ENCODE measurements at regions of chr5 and their contacts with region 1.

Region 1: GRCh38 chr5:181207214-181208107 is 2.5 kb upstream of the TRIM7 start:
- DNase-seq: peak; percentile 76 to 88 (median 81)
- H3K4me3 ChIP-seq: peak overlapping the region; percentile 71
- H3K4me3 Mint-ChIP-seq: peak overlapping the region; percentile 88 to 97 (median 92)
- H3K27ac ChIP-seq: peak overlapping the region; percentile 67
- H3K27ac Mint-ChIP-seq: peak overlapping the region; percentile 91 to 100 (median 98)
- H3K4me1 ChIP-seq: peaks cover 31% of the 10 kb centered on the region
- H3K4me1 Mint-ChIP-seq: peaks cover 24 to 47% (median 32%) of the 10 kb centered on the region in 4 donors
- H3K27me3 ChIP-seq: no peaks in the 10 kb centered on the region
- H3K27me3 Mint-ChIP-seq: peaks cover 7 to 10% of the 10 kb centered on the region in 2 donors

Region 2: GRCh38 chr5:179986328-179986727 is 1221.1 kb before region 1 on chr5:
- CTCF ChIA-PET with region 1: no interaction called
- POLR2A ChIA-PET with region 1: no interaction called
- intact Hi-C with region 1: no loop called
- DNase-seq: no peak
- H3K4me3 ChIP-seq: no peak overlapping the region
- H3K4me3 Mint-ChIP-seq: no peak overlapping the region
- H3K27ac ChIP-seq: no peak overlapping the region
- H3K27ac Mint-ChIP-seq: no peak overlapping the region
- H3K4me1 ChIP-seq: no peaks in the 10 kb centered on the region
- H3K4me1 Mint-ChIP-seq: no peaks in the 10 kb centered on the region
- H3K27me3 ChIP-seq: no peaks in the 10 kb centered on the region
- H3K27me3 Mint-ChIP-seq: no peaks in the 10 kb centered on the region

Region 3: GRCh38 chr5:180950291-180950949 is 257.0 kb before region 1 on chr5:
- CTCF ChIA-PET with region 1: no interaction called
- POLR2A ChIA-PET with region 1: no interaction called
- intact Hi-C with region 1: no loop called
- DNase-seq: no peak
- H3K4me3 ChIP-seq: no peak overlapping the region
- H3K4me3 Mint-ChIP-seq: no peak overlapping the region
- H3K27ac ChIP-seq: no peak overlapping the region
- H3K27ac Mint-ChIP-seq: no peak overlapping the region
- H3K4me1 ChIP-seq: no peaks in the 10 kb centered on the region
- H3K4me1 Mint-ChIP-seq: peaks cover 0 to 2% (median 0%) of the 10 kb centered on the region in 4 donors
- H3K27me3 ChIP-seq: no peaks in the 10 kb centered on the region
- H3K27me3 Mint-ChIP-seq: peaks cover 3 to 4% of the 10 kb centered on the region in 2 donors

Region 4: GRCh38 chr5:181243512-181244343 is 36.3 kb after region 1 on chr5 and contains the start of gene RACK1:
- CTCF ChIA-PET with region 1: interaction called, 8 read pairs
- POLR2A ChIA-PET with region 1: interaction called, 17 read pairs
- intact Hi-C with region 1: no loop called
- DNase-seq: peak; percentile 90 to 95 (median 91)
- H3K4me3 ChIP-seq: peak within 1 kb of the TSS; percentile 97 to 98
- H3K4me3 Mint-ChIP-seq: peak within 1 kb of the TSS; percentile 93 to 100 (median 98)
- H3K27ac ChIP-seq: peak within 1 kb of the TSS; percentile 96
- H3K27ac Mint-ChIP-seq: peak within 1 kb of the TSS; percentile 96 to 100 (median 99)
- H3K4me1 ChIP-seq: peaks cover 61% of the 10 kb centered on the region
- H3K4me1 Mint-ChIP-seq: peaks cover 42 to 85% (median 63%) of the 10 kb centered on the region in 4 donors
- H3K27me3 ChIP-seq: no peaks in the 10 kb centered on the region
- H3K27me3 Mint-ChIP-seq: no peaks in the 10 kb centered on the region
- total RNA-seq, gene RACK1: 1,956 to 2,001 TPM